ENCODE measurements at regions of chr5 and their contacts with region 1.

Region 1: DNA sequence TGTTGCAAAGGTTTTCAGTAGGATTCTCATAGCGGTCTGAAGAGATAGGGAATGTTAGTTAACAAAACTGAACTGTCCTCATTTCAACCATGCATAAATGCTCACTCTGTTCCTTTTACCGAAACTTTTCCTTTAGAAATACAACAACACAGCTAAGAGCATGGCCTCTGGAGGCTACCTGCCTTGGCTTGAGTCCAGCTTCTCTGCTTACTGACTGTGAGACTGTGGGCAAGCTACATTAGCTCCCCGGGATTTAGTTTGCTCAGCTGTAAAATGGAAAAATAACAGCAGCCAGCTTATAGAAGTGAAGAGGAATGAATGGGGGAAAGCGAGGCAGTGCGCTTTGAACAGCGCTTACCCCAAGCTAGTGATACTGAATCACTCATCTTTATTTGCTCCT is 507.9 kb upstream of the DAP start:
- H3K4me3 ChIP-seq: no peak overlapping the region
- H3K27ac ChIP-seq: no peak overlapping the region
- H3K4me1 ChIP-seq: no peaks in the 10 kb centered on the region
- CTCF ChIP-seq: no peak

Region 2: GRCh38 chr5:11251262-11251661 is 17.6 kb before region 1 on chr5:
- CTCF ChIA-PET with region 1: interaction called, 22 read pairs
- POLR2A ChIA-PET with region 1: no interaction called
- H3K4me3 ChIP-seq: no peak overlapping the region
- H3K27ac ChIP-seq: no peak overlapping the region
- H3K4me1 ChIP-seq: no peaks in the 10 kb centered on the region
- CTCF ChIP-seq: no peak